ENCODE measurements at regions of chr11 and their contacts with region 1.

Region 1: DNA sequence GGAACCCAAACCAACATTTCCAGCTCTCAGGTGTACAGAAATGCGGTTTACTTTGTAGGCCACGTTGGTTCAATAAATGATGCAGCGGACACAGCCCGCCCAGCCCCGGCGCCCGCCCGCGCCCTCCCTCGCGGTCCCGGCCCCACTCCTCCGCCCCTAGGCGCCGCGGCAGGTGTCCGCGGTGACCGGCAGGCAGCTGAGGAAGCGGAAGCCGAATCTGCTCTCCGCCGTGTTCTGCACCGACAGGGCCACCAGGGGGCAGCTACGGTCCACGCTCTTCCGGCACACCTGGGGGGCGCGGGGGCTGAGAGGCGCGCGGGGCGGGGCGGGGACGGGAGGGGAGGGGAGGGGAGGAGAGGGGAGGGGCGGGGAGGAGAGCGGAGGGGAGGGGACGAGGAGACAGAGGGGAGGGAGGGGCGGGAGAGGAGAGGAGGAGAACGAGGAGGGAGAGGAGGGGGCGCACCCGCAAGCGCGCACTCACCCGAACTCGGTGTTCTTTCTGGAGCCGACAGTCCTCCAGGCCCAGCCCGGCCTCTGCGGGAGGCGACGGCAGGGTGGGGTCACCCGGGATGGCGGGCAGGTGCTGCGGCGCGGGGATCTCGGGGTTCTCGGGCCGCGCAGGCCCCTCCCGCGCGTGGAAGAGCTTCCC is 5.6 kb downstream of the LMNTD2 start:
- DNase-seq: peak; percentile 74
- H3K4me3 Mint-ChIP-seq: no peak overlapping the region
- H3K27ac Mint-ChIP-seq: no peak overlapping the region
- H3K4me1 Mint-ChIP-seq: peaks cover 7% of the 10 kb centered on the region
- H3K27me3 Mint-ChIP-seq: peaks cover 20% of the 10 kb centered on the region

Region 2: GRCh38 chr11:363948-364761 is 190.8 kb before region 1 on chr11:
- CTCF ChIA-PET with region 1: no interaction called
- POLR2A ChIA-PET with region 1: no interaction called
- DNase-seq: peak; percentile 64
- H3K4me3 Mint-ChIP-seq: no peak overlapping the region
- H3K27ac Mint-ChIP-seq: peak overlapping the region; percentile 60
- H3K4me1 Mint-ChIP-seq: peaks cover 11% of the 10 kb centered on the region
- H3K27me3 Mint-ChIP-seq: peaks cover 31% of the 10 kb centered on the region

Region 3: DNA sequence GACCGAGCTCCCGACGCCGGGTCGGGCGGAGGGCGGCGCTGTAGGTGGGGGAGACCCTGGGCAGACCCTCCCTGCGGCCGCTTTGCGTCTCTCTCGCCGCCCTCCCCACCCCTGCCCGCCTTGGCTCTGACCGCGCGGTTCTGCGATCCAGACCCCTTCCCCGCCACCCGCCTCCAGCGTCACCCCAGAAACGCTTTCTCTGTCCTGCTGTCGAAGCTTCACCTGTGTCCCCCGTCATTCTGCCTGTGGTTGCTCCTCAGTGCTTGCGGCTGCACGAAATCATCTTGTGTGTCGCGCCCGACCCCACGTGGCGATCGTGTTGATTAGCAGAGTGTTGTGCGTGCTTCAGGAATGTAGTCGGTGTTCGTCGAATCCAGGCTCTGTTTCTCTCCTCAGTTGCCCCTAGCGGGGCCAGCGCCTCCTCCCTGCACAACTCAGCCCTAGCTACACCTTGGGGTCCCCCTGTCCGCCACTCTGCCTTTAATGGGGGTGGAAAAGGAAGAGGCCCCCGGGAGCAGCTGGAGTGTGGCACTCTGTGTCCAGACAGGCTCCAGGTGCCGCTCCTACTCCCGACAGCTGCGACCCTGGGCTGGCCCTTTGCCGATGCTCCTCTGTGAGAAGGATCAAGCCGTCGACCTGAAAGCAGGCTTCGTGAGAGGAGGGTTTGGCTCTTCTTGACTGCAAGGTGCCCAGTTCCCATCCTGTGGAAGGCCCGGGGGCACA is 104.0 kb before region 1 on chr11:
- CTCF ChIA-PET with region 1: no interaction called
- POLR2A ChIA-PET with region 1: no interaction called
- DNase-seq: peak; percentile 86
- H3K4me3 Mint-ChIP-seq: peak overlapping the region; percentile 93
- H3K27ac Mint-ChIP-seq: peak overlapping the region; percentile 98
- H3K4me1 Mint-ChIP-seq: peaks cover 38% of the 10 kb centered on the region
- H3K27me3 Mint-ChIP-seq: no peaks in the 10 kb centered on the region

Region 4: DNA sequence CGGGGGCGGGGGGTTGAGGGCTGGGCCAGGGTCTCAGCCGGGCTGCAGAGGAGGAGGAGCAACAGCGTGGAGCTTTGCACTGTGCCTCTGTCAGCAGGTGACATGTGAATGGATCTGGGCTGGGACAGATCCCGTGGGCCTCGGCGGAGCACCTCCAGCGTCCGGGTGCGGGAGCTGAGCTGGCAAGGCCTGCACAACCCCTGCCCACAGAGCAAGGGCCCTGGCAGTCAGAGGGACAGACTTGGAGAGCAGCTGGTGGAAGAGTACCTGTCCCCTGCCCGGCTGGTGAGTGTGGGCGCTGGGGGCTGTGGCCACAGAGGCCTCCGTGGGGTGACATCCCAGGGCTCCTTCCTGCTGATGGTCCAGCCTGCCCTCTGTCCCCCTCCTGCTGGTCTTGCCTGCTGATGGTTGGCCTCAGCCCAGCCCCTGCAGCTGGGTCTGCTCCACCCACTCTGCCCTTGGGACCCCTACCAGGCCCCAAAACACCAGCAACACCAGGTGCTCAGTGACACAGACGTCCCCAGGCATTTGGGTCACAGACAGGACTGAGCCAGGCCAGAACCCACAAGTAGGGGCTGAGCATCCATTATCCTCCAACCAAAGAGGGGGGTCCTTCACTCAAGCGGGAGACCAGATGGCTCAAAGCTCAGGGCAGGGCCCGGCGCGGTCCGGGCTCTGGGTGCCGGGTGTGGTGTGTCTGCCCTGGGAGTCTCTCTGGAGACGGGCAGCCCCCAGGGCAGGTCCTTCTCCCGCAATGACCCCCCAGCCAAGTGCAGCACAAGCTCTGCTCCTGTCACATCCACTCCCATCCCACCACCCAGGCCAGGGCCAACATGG is 14.2 kb before region 1 on chr11:
- CTCF ChIA-PET with region 1: interaction called, 19 read pairs
- POLR2A ChIA-PET with region 1: no interaction called
- DNase-seq: no peak
- H3K4me3 Mint-ChIP-seq: no peak overlapping the region
- H3K27ac Mint-ChIP-seq: no peak overlapping the region
- H3K4me1 Mint-ChIP-seq: peaks cover 17% of the 10 kb centered on the region
- H3K27me3 Mint-ChIP-seq: no peaks in the 10 kb centered on the region

Region 5: GRCh38 chr11:565921-566509 is 11.1 kb after region 1 on chr11:
- CTCF ChIA-PET with region 1: interaction called, 12 read pairs
- POLR2A ChIA-PET with region 1: no interaction called
- DNase-seq: no peak
- H3K4me3 Mint-ChIP-seq: no peak overlapping the region
- H3K27ac Mint-ChIP-seq: no peak overlapping the region
- H3K4me1 Mint-ChIP-seq: peaks cover 24% of the 10 kb centered on the region
- H3K27me3 Mint-ChIP-seq: no peaks in the 10 kb centered on the region

Region 6: DNA sequence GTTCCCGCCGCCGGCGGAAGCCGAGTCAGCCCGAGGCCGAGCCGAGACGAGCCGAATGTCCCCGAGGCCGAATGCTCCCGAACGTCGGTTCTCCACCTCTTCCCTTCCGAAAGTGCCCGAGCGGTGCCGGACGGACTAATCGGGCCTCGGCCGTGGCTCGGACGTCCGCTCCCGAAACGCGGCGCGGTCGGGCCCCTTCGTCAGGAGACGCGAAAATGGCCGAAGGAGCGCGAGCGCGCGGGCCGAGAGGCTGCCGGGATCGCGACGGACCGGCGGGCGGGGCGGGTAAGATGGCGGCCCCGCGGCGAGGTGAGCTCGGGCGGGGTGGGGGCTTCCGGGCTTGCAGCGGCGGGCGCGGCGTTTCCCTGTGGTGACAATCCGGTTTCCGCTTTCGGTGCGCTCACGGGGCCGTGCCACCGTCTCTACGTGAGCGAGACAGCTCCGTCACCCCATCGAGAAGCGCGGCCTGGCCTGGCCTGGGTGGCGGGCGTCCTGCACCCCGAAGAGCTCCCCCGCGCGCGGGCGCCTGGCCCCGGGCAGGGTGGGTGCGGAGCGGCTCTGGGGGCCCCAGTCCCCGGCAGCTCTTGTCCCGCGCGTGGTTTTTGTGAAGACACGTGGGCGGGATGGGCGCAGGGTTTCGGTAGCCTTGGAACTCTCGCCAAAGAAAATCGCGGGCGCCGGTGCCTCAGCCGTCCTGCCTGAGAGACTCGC is 140.7 kb after region 1 on chr11 and contains the start of gene TMEM80:
- CTCF ChIA-PET with region 1: interaction called, 10 read pairs
- POLR2A ChIA-PET with region 1: interaction called, 3 read pairs
- DNase-seq: peak; percentile 99
- H3K4me3 Mint-ChIP-seq: peak within 1 kb of the TSS; percentile 82
- H3K27ac Mint-ChIP-seq: peak within 1 kb of the TSS; percentile 94
- H3K4me1 Mint-ChIP-seq: peaks cover 57% of the 10 kb centered on the region
- H3K27me3 Mint-ChIP-seq: no peaks in the 10 kb centered on the region
- total RNA-seq, gene TMEM80: 39.1 to 44.7 TPM

Region 7: GRCh38 chr11:723120-723883 is 168.4 kb after region 1 on chr11:
- CTCF ChIA-PET with region 1: interaction called, 11 read pairs
- POLR2A ChIA-PET with region 1: no interaction called
- DNase-seq: peak; percentile 72
- H3K4me3 Mint-ChIP-seq: no peak overlapping the region
- H3K27ac Mint-ChIP-seq: peak overlapping the region; percentile 78
- H3K4me1 Mint-ChIP-seq: peaks cover 21% of the 10 kb centered on the region
- H3K27me3 Mint-ChIP-seq: peaks cover 27% of the 10 kb centered on the region